Breast epithelium (tissue), 4 donors: ENCODE measurements at regions of chr19 and their contacts with region 1.

Region 1: GRCh38 chr19:53808710-53809125 is 15.4 kb downstream of the NLRP12 start:
- DNase-seq: no peak
- H3K4me3 ChIP-seq: no peak overlapping the region
- H3K27ac ChIP-seq: no peak overlapping the region
- H3K4me1 ChIP-seq: no peaks in the 10 kb centered on the region
- H3K27me3 ChIP-seq: no peaks in the 10 kb centered on the region
- CTCF ChIP-seq: no peak
- POLR2A ChIP-seq: no peak

Region 2: GRCh38 chr19:53076977-53077376 is 731.7 kb before region 1 on chr19:
- intact Hi-C with region 1: loop called (anchors 10 kb)
- DNase-seq: no peak
- H3K4me3 ChIP-seq: no peak overlapping the region
- H3K27ac ChIP-seq: no peak overlapping the region
- H3K4me1 ChIP-seq: no peaks in the 10 kb centered on the region
- H3K27me3 ChIP-seq: no peaks in the 10 kb centered on the region
- CTCF ChIP-seq: peak in 2 of 3 donors; percentile 17 to 48
- POLR2A ChIP-seq: no peak

Region 3: DNA sequence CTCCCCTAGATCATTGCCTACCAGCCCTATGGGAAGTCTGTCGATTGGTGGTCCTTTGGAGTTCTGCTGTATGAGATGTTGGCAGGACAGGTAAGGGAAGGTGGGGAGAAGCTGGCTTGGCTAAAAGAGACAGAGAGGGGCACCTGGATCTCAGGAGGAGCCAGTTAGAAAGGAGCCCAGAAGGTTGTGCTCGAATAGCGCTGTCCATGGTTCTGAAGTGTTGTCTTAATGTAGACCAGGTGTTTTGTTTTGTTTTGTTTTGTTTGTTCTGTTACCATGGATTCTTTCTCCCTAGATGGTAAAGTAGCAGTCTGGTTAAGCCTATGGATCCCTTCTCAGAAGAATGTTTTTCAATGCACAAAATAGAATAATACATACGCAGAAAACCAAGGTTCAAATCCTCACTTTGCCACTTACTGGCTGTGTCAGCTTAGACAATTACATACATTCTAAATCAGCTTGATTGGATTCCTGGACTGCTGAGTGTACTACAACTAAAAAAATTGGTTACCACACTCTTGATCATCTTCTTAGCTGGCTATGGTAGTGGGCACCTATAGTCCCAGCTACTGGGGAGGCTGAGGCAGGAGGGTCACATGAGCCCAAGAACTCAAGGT is 94.5 kb after region 1 on chr19:
- intact Hi-C with region 1: no loop called
- DNase-seq: no peak
- H3K4me3 ChIP-seq: no peak overlapping the region
- H3K27ac ChIP-seq: no peak overlapping the region
- H3K4me1 ChIP-seq: no peaks in the 10 kb centered on the region
- H3K27me3 ChIP-seq: peaks cover 8 to 56% of the 10 kb centered on the region in 2 donors
- CTCF ChIP-seq: no peak
- POLR2A ChIP-seq: no peak

Region 4: DNA sequence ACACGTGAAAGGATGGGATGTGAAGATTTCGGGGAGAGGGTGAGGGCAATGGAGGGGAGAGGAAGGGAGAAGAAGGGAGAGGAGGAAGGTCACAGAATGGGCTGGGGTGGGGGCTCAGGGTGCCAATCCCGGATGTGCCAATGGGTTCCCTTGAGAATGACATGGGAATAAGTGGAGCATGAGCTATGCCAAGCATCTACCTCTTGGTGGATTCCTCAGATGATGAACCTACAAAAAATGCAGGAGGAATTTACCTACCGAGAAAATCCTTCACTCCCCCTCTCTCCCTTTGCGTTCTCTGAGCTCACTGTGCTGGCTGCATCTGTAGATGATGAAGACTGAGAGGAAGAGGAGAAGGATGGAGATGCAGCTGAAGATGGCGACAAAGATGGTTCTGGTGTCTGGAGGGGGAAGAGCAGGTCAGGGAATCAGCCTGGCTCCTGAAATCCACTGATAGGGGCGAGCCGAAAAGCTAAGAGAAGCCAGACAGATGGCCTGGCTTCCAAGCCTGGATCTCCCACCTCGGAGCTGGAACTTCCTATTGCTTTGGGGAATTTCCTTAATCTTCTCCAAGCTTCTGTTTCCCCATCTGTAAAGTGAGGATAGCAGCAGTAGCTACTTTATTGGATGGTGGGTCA is 233.4 kb after region 1 on chr19:
- intact Hi-C with region 1: no loop called
- DNase-seq: no peak
- H3K4me3 ChIP-seq: no peak overlapping the region
- H3K27ac ChIP-seq: no peak overlapping the region
- H3K4me1 ChIP-seq: no peaks in the 10 kb centered on the region
- H3K27me3 ChIP-seq: peaks cover 0 to 28% of the 10 kb centered on the region in 2 donors
- CTCF ChIP-seq: no peak
- POLR2A ChIP-seq: no peak